GM10248 (cell line): ENCODE measurements at regions of chr3 and their contacts with region 1.

Region 1: DNA sequence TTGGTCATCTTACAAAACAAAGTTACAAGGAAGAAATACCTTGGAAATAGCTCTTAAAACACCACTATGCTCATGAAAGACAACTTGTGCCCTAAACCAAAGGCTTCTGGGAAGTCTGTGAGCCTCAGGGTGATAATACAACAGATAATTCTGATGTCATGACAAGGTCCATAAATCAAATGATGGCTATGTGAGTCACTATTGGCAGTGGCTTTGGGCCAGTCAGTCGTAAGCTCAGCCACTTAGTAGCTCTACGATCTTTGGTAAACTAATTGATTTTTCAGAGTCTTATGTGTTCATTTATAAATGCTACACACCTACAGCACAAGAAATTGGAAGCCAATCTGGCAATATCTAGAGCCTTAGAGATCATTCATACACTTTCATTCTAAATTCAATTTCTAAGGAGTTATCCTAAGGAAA is 12.9 kb downstream of the TNIK start:
- DNase-seq: no peak
- CTCF ChIP-seq: no peak

Region 2: DNA sequence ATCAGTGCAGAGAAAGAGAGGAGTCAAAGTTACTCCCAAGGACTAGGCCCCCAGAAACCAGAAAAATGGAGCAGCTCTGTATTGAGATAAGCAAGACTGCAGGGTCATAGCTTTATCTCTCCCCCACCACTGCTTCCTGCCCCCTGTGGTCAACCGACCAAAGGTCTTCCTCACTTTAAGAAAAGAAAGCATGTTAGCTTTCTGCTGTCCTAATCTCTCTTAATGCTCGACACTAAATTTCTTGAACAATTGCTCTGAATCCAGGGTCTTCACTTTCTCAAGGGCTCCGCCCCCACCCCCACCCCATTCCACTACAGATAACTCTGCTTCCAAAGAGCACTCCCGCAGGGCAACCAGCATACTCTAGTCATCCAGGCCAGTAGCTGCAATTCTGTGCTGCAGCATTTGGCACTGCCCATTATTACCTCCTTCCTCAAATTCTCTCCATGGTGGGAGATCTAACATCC is 19.0 kb before region 1 on chr3:
- CTCF ChIA-PET with region 1: interaction called, 12 read pairs
- POLR2A ChIA-PET with region 1: no interaction called
- DNase-seq: peak; percentile 18
- CTCF ChIP-seq: no peak

Region 3: DNA sequence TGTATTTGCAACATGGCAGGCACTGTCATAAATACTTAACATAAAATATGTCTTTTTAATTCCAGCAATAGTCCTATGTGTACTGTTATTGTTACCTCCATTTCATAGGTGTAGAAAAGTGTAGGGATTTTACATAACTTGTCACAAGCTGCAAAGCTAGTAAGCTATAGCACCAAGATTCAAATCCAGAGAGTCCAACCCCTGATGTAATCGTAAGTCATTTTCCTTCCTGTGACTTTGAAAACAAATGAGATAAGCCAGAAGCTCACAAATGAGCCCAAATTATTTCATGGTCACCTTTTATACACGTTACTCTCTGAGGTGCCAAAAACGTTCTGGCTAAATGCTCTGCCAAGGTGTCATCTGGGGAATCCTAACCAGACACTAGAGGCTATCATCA is 11.0 kb before region 1 on chr3:
- CTCF ChIA-PET with region 1: interaction called, 20 read pairs
- POLR2A ChIA-PET with region 1: no interaction called
- DNase-seq: no peak
- CTCF ChIP-seq: no peak

Region 4: DNA sequence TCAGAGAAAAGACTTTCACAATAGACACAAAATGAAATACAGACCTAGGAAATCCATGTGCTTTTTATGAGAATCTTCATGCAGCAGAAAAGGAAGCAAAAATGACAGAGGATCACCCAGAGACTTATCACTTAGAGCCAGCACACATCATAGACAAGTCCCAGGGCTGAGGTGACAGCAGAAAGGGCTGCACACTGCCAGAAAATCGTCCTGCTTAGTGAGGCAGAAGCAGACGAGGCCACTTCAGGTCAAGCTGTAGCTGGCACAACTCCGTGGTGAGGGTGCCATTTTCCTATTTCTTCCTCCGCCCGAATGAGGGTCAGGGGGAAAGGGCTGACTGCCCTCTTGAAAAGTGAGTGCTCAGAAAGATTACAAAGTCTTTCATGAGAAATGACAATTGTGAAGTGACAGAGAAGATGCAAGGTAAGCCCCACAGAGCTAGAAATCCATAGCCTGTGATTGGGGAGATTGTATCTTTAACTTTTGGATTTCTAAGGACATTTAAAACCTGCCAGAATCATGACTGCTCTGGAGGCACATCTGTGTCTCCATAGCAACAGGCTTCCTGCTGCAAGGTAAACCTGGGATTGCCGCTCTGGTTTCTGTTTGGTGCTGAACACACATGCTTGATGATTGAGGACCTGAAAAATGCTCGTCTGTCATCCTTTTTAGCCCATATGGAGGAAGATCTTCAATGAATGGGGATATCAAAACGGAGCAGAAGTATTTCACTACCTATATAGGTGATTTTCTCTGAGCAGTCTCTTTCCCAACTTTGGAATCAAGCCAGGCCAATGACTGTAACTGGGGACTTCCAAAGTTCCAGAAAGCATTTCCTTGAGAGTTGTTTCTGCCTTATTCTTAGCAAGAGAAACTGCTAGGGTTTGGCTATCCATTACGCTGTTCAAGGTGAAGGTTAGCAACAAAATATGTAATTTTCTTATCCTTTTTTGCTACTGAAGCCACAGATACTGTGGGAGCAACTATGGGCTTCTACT is 109.1 kb after region 1 on chr3:
- CTCF ChIA-PET with region 1: no interaction called
- POLR2A ChIA-PET with region 1: no interaction called
- DNase-seq: no peak
- CTCF ChIP-seq: no peak